IMR-90 (cell line): ENCODE measurements at regions of chr15 and their contacts with region 1.

Region 1: GRCh38 chr15:78506971-78507830 is at the start of gene HYKK:
- DNase-seq: peak; percentile 96
- ATAC-seq: peak; percentile 95
- H3K4me3 ChIP-seq: peak within 1 kb of the TSS; percentile 67
- H3K27ac ChIP-seq: no peak within 1 kb of the TSS; the same call in 1 of the 2 replicates
- H3K4me1 ChIP-seq: no peaks in the 10 kb centered on the region
- H3K27me3 ChIP-seq: no peaks in the 10 kb centered on the region
- CTCF ChIP-seq: no peak
- POLR2A ChIP-seq: no peak
- RAD21 ChIP-seq: no peak
- total RNA-seq, gene HYKK: 3.9 and 5.6 TPM in 2 replicates

Region 2: GRCh38 chr15:78492872-78493271 is 14.3 kb before region 1 on chr15:
- CTCF ChIA-PET with region 1: interaction called, 3 read pairs
- POLR2A ChIA-PET with region 1: interaction called, 15 read pairs
- dilution Hi-C with region 1: no loop called
- in situ Hi-C with region 1: no loop called
- intact Hi-C with region 1: no loop called
- DNase-seq: peak; percentile 16
- ATAC-seq: no peak
- H3K4me3 ChIP-seq: no peak overlapping the region
- H3K27ac ChIP-seq: no peak overlapping the region
- H3K4me1 ChIP-seq: no peaks in the 10 kb centered on the region
- H3K27me3 ChIP-seq: no peaks in the 10 kb centered on the region
- CTCF ChIP-seq: no peak
- POLR2A ChIP-seq: no peak
- RAD21 ChIP-seq: no peak

Region 3: DNA sequence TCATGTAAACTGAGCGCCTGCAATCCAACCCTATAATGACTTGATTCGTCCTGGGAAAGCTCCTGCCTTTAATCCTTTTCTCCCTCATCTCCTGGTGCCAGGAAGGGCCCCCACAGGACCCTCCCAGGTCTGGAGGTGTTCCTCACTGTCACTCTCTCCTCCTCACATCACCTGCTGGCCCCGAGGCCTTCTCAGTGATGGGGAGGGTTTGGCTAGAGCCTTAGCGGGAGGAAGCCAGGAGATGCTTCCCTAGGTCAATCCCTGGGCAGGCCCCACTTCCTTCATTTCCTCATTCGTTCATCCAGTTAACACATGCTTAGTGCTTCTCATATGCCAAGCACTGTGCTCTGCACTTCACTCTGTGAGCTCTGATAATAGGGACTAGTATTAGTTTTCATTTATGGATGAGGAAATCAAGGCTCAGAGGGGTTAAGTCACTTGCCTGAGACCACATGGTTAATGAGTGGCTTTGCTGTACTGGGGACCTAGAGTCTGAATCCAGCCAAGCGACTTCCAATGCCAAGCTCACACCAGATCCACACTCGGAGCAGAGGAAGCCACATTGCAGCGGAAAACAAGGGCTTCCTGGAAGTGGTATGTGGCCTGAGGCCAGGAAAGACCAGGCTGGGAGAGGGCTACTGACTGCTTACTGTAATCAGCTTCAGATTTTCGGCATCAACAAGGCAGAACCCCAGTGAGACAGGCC is 184.1 kb after region 1 on chr15:
- CTCF ChIA-PET with region 1: no interaction called
- POLR2A ChIA-PET with region 1: interaction called, 12 read pairs
- dilution Hi-C with region 1: no loop called
- in situ Hi-C with region 1: no loop called
- intact Hi-C with region 1: no loop called
- DNase-seq: no peak
- ATAC-seq: no peak
- H3K4me3 ChIP-seq: no peak overlapping the region
- H3K27ac ChIP-seq: no peak overlapping the region
- H3K4me1 ChIP-seq: no peaks in the 10 kb centered on the region
- H3K27me3 ChIP-seq: peaks cover 14% of the 10 kb centered on the region
- CTCF ChIP-seq: no peak
- POLR2A ChIP-seq: no peak
- RAD21 ChIP-seq: no peak